ENCODE measurements at regions of chr3 and their contacts with region 1.

Region 1: DNA sequence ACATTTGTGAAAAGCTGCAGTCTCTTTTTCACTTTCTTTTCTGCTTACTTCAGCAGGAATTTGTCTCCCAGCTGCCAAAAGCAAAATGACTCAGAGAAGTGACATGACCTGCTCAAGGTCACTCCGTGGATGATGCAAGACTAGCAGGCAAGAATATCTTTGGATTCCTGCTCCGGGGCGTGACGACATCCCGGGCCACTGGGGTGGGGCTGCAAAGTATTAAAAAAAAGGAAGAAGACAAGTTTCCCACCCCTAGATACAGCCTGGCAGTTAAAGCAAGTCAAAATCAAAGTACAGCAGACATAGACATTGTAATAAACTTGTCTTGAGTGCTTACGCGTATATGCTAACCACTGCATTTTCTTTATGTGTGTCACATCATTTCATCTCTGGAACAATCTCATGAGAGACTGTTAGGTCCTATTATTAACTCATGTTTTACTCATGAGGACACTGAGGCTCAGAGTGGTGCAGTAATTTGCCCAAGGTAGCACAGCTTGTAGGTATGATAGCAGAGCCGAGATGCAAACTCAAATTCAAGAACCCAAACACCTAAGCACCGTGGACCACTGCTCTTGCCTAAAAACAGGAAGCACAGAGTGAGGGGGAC is 485.2 kb upstream of the PROK2 start:
- DNase-seq: peak; percentile 95
- H3K4me3 ChIP-seq: no peak overlapping the region
- H3K27ac ChIP-seq: peak overlapping the region in 3 of 4 donors; percentile 16 to 47 (median 45)
- H3K4me1 ChIP-seq: peaks cover 0 to 44% (median 39%) of the 10 kb centered on the region in 4 donors
- H3K27me3 ChIP-seq: no peaks in the 10 kb centered on the region
- CTCF ChIP-seq: no peak
- EP300 ChIP-seq: peak in 2 of 4 donors; percentile 54 to 70
- POLR2A ChIP-seq: no peak

Region 2: GRCh38 chr3:72152551-72153476 is 117.4 kb before region 1 on chr3:
- intact Hi-C with region 1: loop called (anchors 5 kb)
- DNase-seq: peak; percentile 90
- H3K4me3 ChIP-seq: peak overlapping the region; percentile 13 to 33 (median 22)
- H3K27ac ChIP-seq: peak overlapping the region; percentile 61 to 78 (median 72)
- H3K4me1 ChIP-seq: peaks cover 0 to 41% (median 38%) of the 10 kb centered on the region in 4 donors
- H3K27me3 ChIP-seq: no peaks in the 10 kb centered on the region
- CTCF ChIP-seq: no peak
- EP300 ChIP-seq: peak in 1 of 4 donors; percentile 9
- POLR2A ChIP-seq: no peak

Region 3: DNA sequence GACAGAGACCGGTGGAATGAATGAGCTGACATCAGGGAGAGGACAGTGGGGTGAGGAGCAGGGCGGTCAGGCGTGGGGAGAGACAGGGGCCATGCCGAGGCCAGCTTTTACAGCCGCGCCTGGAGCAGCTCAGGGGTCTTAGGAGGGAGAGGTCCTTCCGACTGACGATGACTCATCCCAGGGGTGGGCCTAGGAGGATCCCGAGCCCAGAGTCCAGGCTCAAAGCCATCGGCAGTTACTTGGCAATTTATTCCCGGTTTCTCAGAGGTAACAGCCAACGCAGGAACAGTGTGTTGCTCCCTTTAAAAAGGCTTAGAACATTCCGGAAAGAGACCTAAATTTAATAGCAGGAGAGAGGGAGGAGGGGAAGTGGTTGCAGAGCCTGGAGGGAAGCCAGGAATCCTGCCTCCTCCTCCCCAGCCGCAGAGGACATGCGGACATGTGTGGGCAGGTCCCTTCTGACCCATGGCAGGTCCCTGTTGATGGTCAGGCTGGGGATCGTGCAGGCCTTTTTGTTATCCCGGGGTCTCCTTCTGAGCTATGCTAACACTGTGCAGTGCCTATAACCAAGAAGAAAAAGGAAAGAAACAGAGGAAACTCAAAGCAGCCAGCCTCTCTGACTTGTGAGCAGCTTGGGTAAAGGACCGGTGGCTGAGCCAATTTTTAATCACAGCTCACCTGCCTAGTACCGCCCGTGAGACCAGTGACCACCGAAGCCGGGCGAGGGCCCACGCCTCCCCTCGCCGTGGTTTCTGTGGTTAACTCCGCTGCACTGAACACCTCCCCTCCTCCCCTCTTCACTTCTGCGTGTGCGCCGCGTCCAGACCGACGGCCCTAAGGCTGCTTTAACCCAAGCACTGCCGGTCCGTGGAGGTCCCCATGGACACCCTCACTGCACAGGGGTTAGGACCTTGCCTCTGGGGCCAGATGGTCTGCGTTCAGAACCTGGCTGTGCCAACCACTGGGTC is 92.8 kb before region 1 on chr3:
- intact Hi-C with region 1: no loop called
- DNase-seq: peak; percentile 78
- H3K4me3 ChIP-seq: peak overlapping the region; percentile 7 to 40 (median 26)
- H3K27ac ChIP-seq: peak overlapping the region in 3 of 4 donors; percentile 17 to 64 (median 60)
- H3K4me1 ChIP-seq: peaks cover 0 to 44% (median 41%) of the 10 kb centered on the region in 4 donors
- H3K27me3 ChIP-seq: no peaks in the 10 kb centered on the region
- CTCF ChIP-seq: no peak
- EP300 ChIP-seq: peak in 1 of 4 donors; percentile 34
- POLR2A ChIP-seq: no peak

Region 4: GRCh38 chr3:72310419-72311380 is 40.5 kb after region 1 on chr3:
- intact Hi-C with region 1: no loop called
- DNase-seq: no peak
- H3K4me3 ChIP-seq: no peak overlapping the region
- H3K27ac ChIP-seq: no peak overlapping the region
- H3K4me1 ChIP-seq: no peaks in the 10 kb centered on the region
- H3K27me3 ChIP-seq: no peaks in the 10 kb centered on the region
- CTCF ChIP-seq: no peak
- EP300 ChIP-seq: no peak
- POLR2A ChIP-seq: no peak

Region 5: DNA sequence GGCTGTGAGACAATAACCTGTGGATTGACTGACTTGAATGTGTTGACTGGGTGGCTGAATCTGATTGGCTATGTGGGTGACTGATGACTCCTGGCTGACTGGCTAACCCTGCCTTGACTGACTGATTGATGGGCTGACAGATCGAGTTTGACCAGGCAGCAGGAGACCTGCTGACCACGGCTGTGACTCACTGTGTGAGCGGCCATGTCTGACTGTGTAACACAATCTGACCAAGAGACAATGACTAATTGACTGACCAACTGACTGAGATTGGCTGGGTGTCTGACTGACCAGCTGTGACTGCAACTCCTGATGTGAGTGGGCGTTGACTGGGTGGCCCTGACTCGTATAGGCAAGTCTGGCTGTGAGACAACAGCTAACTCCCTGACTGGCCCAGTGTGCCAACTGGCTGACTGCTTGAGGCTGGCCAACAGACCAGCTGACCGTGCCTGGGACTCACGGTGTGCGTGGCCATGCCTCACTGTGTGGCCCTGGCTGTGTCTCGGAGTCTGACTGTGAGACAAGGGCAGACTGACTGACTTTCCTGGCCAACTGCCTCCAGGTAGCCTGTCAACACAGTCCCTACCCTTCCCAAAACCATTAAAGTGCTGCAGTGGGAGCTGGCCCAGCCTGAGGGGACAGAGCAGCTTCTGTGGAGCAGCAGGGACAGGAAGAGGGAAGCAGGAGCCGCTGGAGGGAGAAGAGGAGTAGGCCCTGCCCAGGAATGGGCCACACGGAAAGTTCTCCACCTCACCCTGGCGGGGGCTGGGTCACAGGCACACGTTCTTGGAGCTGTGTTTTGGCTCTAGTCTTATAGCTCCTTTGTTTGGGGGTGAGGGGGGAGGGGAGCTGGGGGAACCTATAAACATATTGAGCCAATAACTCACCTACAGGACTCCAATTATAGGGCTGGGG is 69.2 kb after region 1 on chr3:
- intact Hi-C with region 1: loop called (anchors 5 kb)
- DNase-seq: no peak
- H3K4me3 ChIP-seq: no peak overlapping the region
- H3K27ac ChIP-seq: peak overlapping the region in 2 of 4 donors; percentile 32 to 46
- H3K4me1 ChIP-seq: peaks cover 0 to 49% (median 44%) of the 10 kb centered on the region in 4 donors
- H3K27me3 ChIP-seq: no peaks in the 10 kb centered on the region
- CTCF ChIP-seq: no peak
- EP300 ChIP-seq: no peak
- POLR2A ChIP-seq: no peak

Measured in sigmoid colon (tissue), 7 donors.